Cardiac septum (tissue), 1 donor: ENCODE measurements at regions of chrX and their contacts with region 1.

Region 1: DNA sequence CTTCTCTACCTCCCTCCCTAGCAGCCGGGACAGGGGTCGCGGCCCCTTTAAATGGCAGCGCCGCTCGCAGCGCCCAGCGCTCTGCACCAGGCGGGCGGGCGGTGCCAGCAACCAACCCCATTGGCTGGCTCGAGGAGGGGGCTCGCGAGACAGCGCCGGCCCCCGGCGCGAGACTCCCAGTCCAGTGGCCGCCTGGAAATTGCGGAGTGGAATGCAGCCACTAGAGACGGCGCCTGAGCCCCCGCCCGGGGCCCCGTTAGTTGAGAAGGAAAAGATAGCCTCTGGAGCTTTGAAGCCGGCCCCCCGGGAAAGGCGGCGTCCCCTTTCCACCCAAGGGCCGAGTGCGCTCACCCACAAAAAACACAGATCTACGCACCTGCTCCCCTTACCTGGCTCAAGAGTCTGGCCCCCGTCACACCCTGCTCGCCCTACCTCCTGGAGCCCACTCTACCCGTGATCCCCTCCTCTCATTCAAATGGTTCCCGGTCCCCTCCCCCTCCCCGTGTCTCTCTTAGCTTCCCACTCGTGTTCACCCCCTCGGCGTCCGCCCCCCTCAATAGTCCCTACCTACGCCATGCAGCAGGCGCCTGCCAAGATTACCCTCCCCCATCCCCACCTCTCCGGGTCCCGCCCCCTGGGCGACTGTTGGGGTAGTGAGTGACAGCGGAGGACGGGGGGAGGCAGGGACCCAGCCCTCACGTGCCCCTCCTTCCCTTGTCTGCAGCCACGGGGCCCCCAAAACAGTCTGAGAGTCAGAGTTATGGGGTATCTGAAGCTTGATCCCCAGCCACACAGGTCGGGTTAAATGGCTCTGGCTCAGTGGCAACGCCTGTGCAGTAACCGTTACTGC is at the start of gene ZMYM3:
- DNase-seq: peak; percentile 93
- total RNA-seq, gene ZMYM3: 12.7 TPM

Region 2: DNA sequence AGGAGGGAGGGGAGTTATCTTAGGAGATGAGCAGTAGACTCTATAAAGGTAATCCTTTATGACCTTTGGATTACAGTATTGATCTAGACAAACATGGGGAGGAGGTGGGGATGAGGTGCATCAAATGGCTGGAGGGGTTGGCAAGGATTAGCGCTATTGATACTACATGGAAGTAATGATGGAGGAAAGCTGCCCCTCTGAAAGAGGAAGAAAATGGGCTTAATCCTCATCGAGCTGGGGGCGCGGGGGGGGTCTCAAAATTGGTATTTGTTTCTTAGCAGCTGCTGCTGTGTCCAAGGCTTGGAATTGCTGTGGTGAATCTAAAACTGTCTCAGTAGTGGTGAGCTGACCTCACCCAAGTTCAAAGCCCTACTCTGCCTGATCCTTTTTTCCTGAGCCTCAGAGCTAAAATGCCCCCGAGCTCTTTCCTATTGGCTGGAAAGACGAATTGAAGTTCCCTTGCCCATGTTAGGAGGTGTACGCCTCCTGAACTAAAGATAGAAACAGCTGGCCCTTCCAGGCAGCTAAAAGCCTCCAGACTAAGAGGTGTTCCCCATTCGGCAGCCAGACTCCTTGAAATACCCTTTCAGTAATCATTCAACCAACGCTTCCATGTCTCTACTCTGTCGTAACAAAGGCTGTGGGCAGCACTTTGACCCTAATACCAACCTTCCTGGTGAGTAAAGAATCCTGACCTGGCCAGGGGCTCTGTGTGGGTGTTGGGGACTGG is 47.0 kb after region 1 on chrX and contains the start of gene ITGB1BP2:
- intact Hi-C with region 1: loop called (anchors 10 kb)
- DNase-seq: no peak
- total RNA-seq, gene ITGB1BP2: 85.5 TPM